ENCODE measurements at regions of chr22 and their contacts with region 1.

Region 1: DNA sequence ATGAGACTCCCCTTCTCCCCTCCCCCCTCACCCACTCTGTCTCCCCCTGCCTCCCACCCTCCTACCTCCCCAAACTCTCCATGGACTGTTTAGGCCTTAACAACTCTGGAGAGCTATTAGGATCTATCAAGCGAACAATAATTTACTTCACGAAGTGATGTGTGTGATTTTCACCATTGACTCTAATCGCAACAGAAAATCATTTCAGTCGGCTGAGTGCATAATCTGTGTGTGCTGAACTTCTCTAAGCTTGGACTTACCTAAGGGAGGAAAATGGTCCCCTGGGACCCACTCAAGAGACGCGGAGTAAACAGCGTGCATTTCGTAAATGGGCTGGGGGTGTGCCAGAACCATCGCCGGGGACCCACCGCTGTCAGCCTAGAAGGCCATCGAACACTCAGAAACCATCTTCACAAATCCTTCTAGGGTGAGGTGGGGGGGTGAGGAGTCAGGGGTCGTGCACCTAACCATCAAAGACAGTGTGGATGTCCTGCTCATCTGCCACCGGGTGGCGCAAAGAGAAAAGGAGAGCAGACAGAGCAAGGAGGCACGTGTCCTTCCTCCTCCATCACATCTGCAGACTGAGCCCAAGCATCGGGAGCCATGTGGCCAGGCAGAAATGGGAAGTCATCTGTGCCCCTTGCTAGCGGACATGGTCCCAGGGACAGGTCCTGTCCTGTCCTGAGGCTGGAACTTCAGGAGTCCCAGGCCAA is 62.1 kb upstream of the NUP50 start:
- DNase-seq: peak in 4 of 9 experiments; percentile 13 to 61 (median 48)
- ATAC-seq: peak; percentile 61
- H3K4me3 ChIP-seq: no peak overlapping the region
- H3K4me3 Mint-ChIP-seq: no peak overlapping the region
- H3K27ac ChIP-seq: no peak overlapping the region
- H3K27ac Mint-ChIP-seq: no peak overlapping the region
- H3K4me1 ChIP-seq: no peaks in the 10 kb centered on the region
- H3K4me1 Mint-ChIP-seq: peaks cover 2% of the 10 kb centered on the region
- H3K27me3 ChIP-seq: no peaks in the 10 kb centered on the region
- H3K27me3 Mint-ChIP-seq: peaks cover 27% of the 10 kb centered on the region
- CTCF ChIP-seq: peak; percentile 24

Region 2: GRCh38 chr22:45208993-45209801 is 107.5 kb after region 1 on chr22:
- CTCF ChIA-PET with region 1: interaction called, 4 read pairs
- POLR2A ChIA-PET with region 1: no interaction called
- intact Hi-C with region 1: loop called in 1 of 2 experiments (anchors 2 kb)
- DNase-seq: peak in 5 of 9 experiments; percentile 17 to 42 (median 39)
- ATAC-seq: peak; percentile 69
- H3K4me3 ChIP-seq: no peak overlapping the region
- H3K4me3 Mint-ChIP-seq: no peak overlapping the region
- H3K27ac ChIP-seq: no peak overlapping the region
- H3K27ac Mint-ChIP-seq: no peak overlapping the region
- H3K4me1 ChIP-seq: no peaks in the 10 kb centered on the region
- H3K4me1 Mint-ChIP-seq: peaks cover 4% of the 10 kb centered on the region
- H3K27me3 ChIP-seq: no peaks in the 10 kb centered on the region
- H3K27me3 Mint-ChIP-seq: no peaks in the 10 kb centered on the region
- CTCF ChIP-seq: peak; percentile 54

Region 3: GRCh38 chr22:45263463-45264269 is 162.0 kb after region 1 on chr22:
- CTCF ChIA-PET with region 1: no interaction called
- POLR2A ChIA-PET with region 1: no interaction called
- intact Hi-C with region 1: loop called in 1 of 2 experiments (anchors 5 kb)
- DNase-seq: peak in 1 of 9 experiments; percentile 30
- ATAC-seq: no peak
- H3K4me3 ChIP-seq: no peak overlapping the region
- H3K4me3 Mint-ChIP-seq: no peak overlapping the region
- H3K27ac ChIP-seq: no peak overlapping the region
- H3K27ac Mint-ChIP-seq: no peak overlapping the region
- H3K4me1 ChIP-seq: peaks cover under 1% of the 10 kb centered on the region
- H3K4me1 Mint-ChIP-seq: peaks cover 5% of the 10 kb centered on the region
- H3K27me3 ChIP-seq: no peaks in the 10 kb centered on the region
- H3K27me3 Mint-ChIP-seq: peaks cover 13% of the 10 kb centered on the region
- CTCF ChIP-seq: no peak